ENCODE measurements at regions of chr11 and their contacts with region 1.

Region 1: GRCh38 chr11:65274735-65275682 is 13.2 kb downstream of the POLA2 start:
- DNase-seq: peak; percentile 89
- ATAC-seq: peak; percentile 92
- H3K4me3 ChIP-seq: peak overlapping the region in 1 of 3 experiments; percentile 17; a peak in 2 of 6 replicates
- H3K27ac ChIP-seq: peak overlapping the region; percentile 30
- H3K4me1 ChIP-seq: peaks cover 30% of the 10 kb centered on the region
- H3K27me3 ChIP-seq: no peaks in the 10 kb centered on the region
- CTCF ChIP-seq: peak; percentile 93
- EP300 ChIP-seq: no peak
- POLR2A ChIP-seq: no peak
- RAD21 ChIP-seq: peak; percentile 95

Region 2: GRCh38 chr11:65261591-65262380 is 13.2 kb before region 1 on chr11 and contains the start of gene POLA2:
- CTCF ChIA-PET with region 1: no interaction called
- POLR2A ChIA-PET with region 1: interaction called, 18 read pairs
- in situ Hi-C with region 1: no loop called
- intact Hi-C with region 1: no loop called
- DNase-seq: peak; percentile 90
- ATAC-seq: peak; percentile 90
- H3K4me3 ChIP-seq: peak within 1 kb of the TSS; percentile 73 to 86 (median 75)
- H3K27ac ChIP-seq: peak within 1 kb of the TSS; percentile 80
- H3K4me1 ChIP-seq: peaks cover 45% of the 10 kb centered on the region
- H3K27me3 ChIP-seq: no peaks in the 10 kb centered on the region; a peak in 2 of 5 replicates
- CTCF ChIP-seq: no peak
- EP300 ChIP-seq: no peak
- POLR2A ChIP-seq: peak; percentile 86 to 89
- RAD21 ChIP-seq: no peak
- total RNA-seq, gene POLA2: 10.7 and 15.6 TPM in 2 replicates

Region 3: GRCh38 chr11:65301491-65302329 is 26.7 kb after region 1 on chr11:
- CTCF ChIA-PET with region 1: interaction called, 3 read pairs
- POLR2A ChIA-PET with region 1: interaction called, 19 read pairs
- in situ Hi-C with region 1: no loop called
- intact Hi-C with region 1: no loop called
- DNase-seq: no peak
- ATAC-seq: peak; percentile 72
- H3K4me3 ChIP-seq: peak overlapping the region in 1 of 3 experiments; percentile 33; a peak in 1 of 6 replicates
- H3K27ac ChIP-seq: no peak overlapping the region
- H3K4me1 ChIP-seq: peaks cover 46% of the 10 kb centered on the region
- H3K27me3 ChIP-seq: no peaks in the 10 kb centered on the region
- CTCF ChIP-seq: peak; percentile 10; the same call in 1 of the 2 replicates
- EP300 ChIP-seq: no peak
- POLR2A ChIP-seq: no peak
- RAD21 ChIP-seq: no peak

Region 4: DNA sequence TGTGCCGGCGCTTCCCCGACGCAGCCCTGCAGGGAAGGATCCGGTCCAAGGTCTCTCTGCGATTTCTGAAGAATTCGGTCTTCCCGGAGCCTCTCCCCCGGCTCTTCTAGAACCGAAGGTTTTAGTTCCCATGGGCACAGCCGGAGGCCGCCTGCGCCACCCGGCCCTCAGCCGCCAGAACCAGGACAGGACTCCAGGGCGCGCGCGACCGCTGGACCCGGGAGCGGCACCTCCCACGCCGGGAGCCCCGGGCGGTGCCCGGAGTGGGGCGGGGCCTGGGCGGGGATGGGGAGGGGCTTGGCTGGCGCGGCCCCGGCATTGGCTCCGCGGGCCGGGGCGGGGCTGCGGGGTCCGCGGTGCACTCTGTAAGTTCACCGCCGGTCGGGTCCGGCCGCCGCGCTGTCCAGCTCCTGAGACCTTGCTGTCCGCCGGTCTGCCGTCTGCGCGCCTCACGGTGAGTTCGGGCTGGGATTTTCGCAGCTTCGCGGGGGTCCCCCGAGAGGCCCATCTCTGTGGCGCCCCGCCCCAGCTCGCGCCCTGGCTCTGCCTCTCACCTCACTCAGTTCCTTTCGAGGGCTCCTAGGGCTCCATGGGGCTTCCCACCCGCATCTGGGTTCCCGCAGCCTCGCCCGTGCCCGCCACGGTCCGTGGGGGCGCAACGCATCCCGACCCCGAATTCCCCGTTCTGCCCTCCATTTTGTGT is 39.6 kb after region 1 on chr11 and contains the start of gene CDC42EP2:
- CTCF ChIA-PET with region 1: interaction called, 139 read pairs
- POLR2A ChIA-PET with region 1: interaction called, 114 read pairs
- in situ Hi-C with region 1: loop called (anchors 5 kb)
- intact Hi-C with region 1: loop called (anchors 1 kb)
- DNase-seq: peak; percentile 74
- ATAC-seq: peak; percentile 89
- H3K4me3 ChIP-seq: peak within 1 kb of the TSS; percentile 88 to 100 (median 95)
- H3K27ac ChIP-seq: peak within 1 kb of the TSS; percentile 77
- H3K4me1 ChIP-seq: peaks cover 64% of the 10 kb centered on the region
- H3K27me3 ChIP-seq: no peaks in the 10 kb centered on the region
- CTCF ChIP-seq: no peak
- EP300 ChIP-seq: no peak
- POLR2A ChIP-seq: peak; percentile 58 to 95
- RAD21 ChIP-seq: no peak; the same call in 1 of the 2 replicates
- total RNA-seq, gene CDC42EP2: 2.5 and 7.1 TPM in 2 replicates

Region 5: GRCh38 chr11:65354265-65355012 is 79.4 kb after region 1 on chr11 and contains the start of gene TIGD3:
- CTCF ChIA-PET with region 1: no interaction called
- POLR2A ChIA-PET with region 1: interaction called, 11 read pairs
- in situ Hi-C with region 1: no loop called
- intact Hi-C with region 1: no loop called
- DNase-seq: peak; percentile 92
- ATAC-seq: peak; percentile 79
- H3K4me3 ChIP-seq: peak within 1 kb of the TSS; percentile 70 to 82 (median 77)
- H3K27ac ChIP-seq: peak within 1 kb of the TSS; percentile 64
- H3K4me1 ChIP-seq: peaks cover 42% of the 10 kb centered on the region
- H3K27me3 ChIP-seq: no peaks in the 10 kb centered on the region
- CTCF ChIP-seq: peak; percentile 33
- EP300 ChIP-seq: no peak
- POLR2A ChIP-seq: peak; percentile 45 to 92
- RAD21 ChIP-seq: 0 out of 2 replicates have a peak, but pooled peaks have one; percentile 15
- total RNA-seq, gene TIGD3: 4.0 and 4.9 TPM in 2 replicates